ENCODE measurements at regions of chr10 and their contacts with region 1.

Region 1: GRCh38 chr10:43292755-43293676 is 26.2 kb upstream of the RASGEF1A start:
- DNase-seq: peak; percentile 33 to 59
- ATAC-seq: peak; percentile 91

Region 2: GRCh38 chr10:42940487-42941294 is 352.3 kb before region 1 on chr10:
- intact Hi-C with region 1: no loop called
- DNase-seq: no peak
- ATAC-seq: no peak

Region 3: DNA sequence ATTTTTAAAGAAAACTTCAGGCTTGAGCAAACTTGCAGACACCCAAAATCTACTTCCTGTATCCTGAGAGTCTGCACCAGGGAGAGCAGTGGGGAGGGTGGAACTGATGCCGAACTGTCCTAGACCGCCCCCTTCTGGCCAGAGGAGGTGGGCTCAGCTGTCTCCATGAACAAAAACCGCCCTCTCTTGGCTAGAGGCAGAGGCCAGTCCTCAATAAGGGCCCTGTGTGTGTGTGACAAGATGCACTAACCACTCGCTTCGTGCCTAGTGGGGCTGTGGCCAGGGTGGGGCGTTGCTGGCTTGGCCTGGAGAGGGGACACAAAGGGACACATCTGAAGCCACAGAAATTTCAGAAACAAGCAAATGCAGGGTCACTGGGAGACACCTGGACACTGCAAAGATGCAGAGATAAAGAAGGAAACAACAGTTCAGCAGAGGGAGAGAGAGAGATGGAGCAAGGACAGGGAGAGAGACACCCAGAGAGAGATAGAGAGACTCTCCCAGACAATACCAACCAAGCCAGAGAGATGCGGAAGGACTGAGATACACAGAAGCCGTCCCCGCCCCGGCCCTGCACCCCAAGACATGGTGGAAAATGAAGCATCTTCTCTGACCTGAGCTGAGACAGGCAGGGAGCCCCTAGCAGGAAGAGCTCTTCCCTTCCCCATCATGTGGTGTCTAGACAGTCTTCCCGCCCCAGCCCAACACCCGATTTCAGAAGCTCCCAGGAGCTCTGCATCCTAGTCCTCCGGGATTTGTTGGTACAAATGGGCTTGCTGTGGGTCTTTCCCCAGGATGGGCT is 55.7 kb after region 1 on chr10:
- intact Hi-C with region 1: loop called in 1 of 2 experiments (anchors 5 kb)
- DNase-seq: peak; percentile 76 to 91
- ATAC-seq: peak; percentile 96

Region 4: DNA sequence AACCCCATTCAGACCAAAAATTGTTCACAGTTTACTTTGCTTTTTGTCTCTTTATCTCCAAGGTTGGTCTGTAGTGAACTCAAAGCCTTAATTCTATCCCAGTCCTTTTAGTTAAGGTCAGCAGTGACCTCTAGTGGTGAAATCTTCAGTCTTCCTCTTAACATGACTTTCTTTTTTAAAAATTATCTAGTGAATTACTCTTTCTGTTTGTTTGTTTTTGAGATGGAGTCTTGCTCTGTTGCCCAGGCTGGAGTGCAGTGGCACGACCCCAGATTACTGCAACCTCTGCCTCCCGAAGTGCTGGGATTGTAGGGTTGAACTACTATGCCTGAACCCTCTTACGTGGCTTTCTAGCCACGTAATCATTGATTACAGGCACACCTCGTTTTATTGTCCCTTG is 168.9 kb after region 1 on chr10:
- intact Hi-C with region 1: loop called in 1 of 2 experiments (anchors 5 kb)
- DNase-seq: no peak
- ATAC-seq: peak; percentile 86

Region 5: GRCh38 chr10:43585046-43585445 is 292.0 kb after region 1 on chr10:
- intact Hi-C with region 1: no loop called
- DNase-seq: no peak
- ATAC-seq: no peak

Measured in left colon (tissue), 2 donors.